Ovary (tissue), 10 donors: ENCODE measurements at regions of chr18 and their contacts with region 1.

Region 1: GRCh38 chr18:47887227-47887626 is 43.2 kb downstream of the SMAD2 start:
- DNase-seq: no peak
- H3K4me3 ChIP-seq: no peak overlapping the region
- H3K27ac ChIP-seq: no peak overlapping the region
- H3K4me1 ChIP-seq: no peaks in the 10 kb centered on the region
- H3K27me3 ChIP-seq: no peaks in the 10 kb centered on the region
- CTCF ChIP-seq: no peak
- EP300 ChIP-seq: no peak
- POLR2A ChIP-seq: no peak

Region 2: DNA sequence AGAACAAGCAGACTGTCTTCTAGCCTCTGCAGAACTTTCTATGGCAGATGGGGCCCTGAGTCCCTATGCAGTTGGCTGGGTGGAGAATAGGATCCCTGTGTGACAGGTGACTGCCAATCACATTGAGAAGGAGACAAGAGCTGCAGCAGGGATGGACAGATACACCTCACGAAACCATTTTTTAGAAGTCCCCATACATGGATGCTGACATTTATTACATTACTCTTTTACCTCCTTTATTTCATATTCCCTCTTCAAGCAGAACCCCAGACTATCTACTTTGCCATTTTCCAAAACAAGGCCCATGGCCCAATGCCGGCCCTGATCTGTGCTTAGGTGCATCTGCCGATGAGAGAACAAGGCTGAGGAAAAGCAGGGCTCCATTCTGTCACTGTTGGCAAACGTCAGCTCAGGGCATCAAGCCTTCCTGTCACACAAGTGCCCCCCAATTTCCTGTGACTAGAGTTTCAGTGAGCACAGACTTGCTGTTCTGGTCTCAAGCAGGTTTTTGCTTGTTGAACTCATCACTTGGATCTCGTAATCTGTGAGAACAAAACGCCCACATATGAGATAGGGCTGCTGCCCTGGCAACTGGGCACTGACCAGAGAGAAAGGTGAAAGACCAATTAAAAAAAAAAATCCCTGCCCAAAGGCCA is 1266.0 kb before region 1 on chr18:
- intact Hi-C with region 1: no loop called
- DNase-seq: no peak
- H3K4me3 ChIP-seq: no peak overlapping the region
- H3K27ac ChIP-seq: no peak overlapping the region
- H3K4me1 ChIP-seq: peaks cover 7% of the 10 kb centered on the region
- H3K27me3 ChIP-seq: no peaks in the 10 kb centered on the region
- CTCF ChIP-seq: no peak
- EP300 ChIP-seq: no peak
- POLR2A ChIP-seq: no peak

Region 3: GRCh38 chr18:47901624-47902362 is 14.6 kb after region 1 on chr18:
- intact Hi-C with region 1: loop called in 1 of 4 experiments (anchors 2 kb)
- DNase-seq: no peak
- H3K4me3 ChIP-seq: no peak overlapping the region
- H3K27ac ChIP-seq: no peak overlapping the region
- H3K4me1 ChIP-seq: no peaks in the 10 kb centered on the region
- H3K27me3 ChIP-seq: no peaks in the 10 kb centered on the region
- CTCF ChIP-seq: no peak
- EP300 ChIP-seq: no peak
- POLR2A ChIP-seq: no peak